ENCODE measurements at regions of chr18 and their contacts with region 1.

Region 1: DNA sequence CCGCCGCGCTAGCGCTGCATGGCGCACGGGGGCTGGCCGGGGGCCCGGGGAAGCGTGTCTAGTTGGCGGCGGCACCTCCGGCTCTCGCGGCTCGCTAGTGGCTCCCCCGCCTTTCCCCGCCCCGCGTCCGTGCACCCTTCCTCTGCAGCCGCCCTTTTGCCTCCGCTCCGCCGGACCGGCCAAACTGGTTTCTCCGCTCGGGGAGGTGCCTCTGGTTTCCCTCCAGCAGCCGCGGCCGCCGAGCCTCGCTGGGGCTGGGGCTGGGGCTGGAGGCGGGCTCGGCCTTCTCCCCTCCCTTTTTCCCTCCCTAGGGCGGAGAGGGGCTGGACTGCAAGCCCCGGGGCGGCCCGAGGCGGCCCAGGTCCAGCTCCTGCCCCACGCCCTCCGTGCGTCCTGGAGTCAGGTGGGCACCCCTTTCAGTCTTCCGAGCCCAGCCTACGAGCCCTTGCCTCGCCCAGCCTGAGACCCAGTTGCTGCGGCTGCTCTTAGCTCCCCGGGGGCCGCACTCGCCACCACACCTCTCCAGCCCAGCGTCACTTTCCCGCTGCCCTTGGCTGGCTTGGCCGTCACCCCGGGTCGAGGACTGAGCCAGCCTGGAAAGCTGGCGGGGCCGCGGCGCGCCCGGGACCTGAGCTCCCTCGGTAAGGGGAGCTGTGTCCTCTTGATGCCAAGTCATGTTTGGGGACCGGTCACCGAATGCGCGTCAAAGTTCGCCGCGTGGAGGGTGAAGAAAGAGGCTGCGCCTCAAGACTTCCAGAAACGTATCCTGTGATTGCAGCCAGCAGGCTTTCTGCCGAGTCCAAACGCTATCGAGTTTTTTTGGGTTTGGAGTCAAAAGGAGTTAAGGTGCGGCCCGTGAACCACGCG is at the start of gene ATP8B1:
- DNase-seq: peak; percentile 73
- ATAC-seq: peak; percentile 89
- H3K4me3 ChIP-seq: peak within 1 kb of the TSS; percentile 95
- H3K27ac ChIP-seq: peak within 1 kb of the TSS; percentile 77
- H3K4me1 ChIP-seq: peaks cover 8% of the 10 kb centered on the region
- H3K27me3 ChIP-seq: no peaks in the 10 kb centered on the region
- CTCF ChIP-seq: no peak
- POLR2A ChIP-seq: peak; percentile 47; the same call in 1 of the 2 replicates
- RAD21 ChIP-seq: no peak
- total RNA-seq, gene ATP8B1: 136 and 170 TPM in 2 replicates

Region 2: GRCh38 chr18:57666818-57667497 is 136.4 kb before region 1 on chr18:
- CTCF ChIA-PET with region 1: no interaction called
- POLR2A ChIA-PET with region 1: no interaction called
- dilution Hi-C with region 1: no loop called
- in situ Hi-C with region 1: no loop called
- intact Hi-C with region 1: loop called (anchors 10 kb)
- DNase-seq: peak; percentile 74
- ATAC-seq: peak; percentile 78
- H3K4me3 ChIP-seq: no peak overlapping the region
- H3K27ac ChIP-seq: peak overlapping the region; percentile 48; the same call in 1 of the 2 replicates
- H3K4me1 ChIP-seq: peaks cover 5% of the 10 kb centered on the region
- H3K27me3 ChIP-seq: no peaks in the 10 kb centered on the region
- CTCF ChIP-seq: no peak
- POLR2A ChIP-seq: no peak
- RAD21 ChIP-seq: no peak

Region 3: GRCh38 chr18:57698571-57699276 is 104.6 kb before region 1 on chr18:
- CTCF ChIA-PET with region 1: interaction called, 7 read pairs
- POLR2A ChIA-PET with region 1: no interaction called
- dilution Hi-C with region 1: no loop called
- in situ Hi-C with region 1: no loop called
- intact Hi-C with region 1: loop called (anchors 10 kb)
- DNase-seq: peak; percentile 74
- ATAC-seq: peak; percentile 54
- H3K4me3 ChIP-seq: no peak overlapping the region
- H3K27ac ChIP-seq: no peak overlapping the region
- H3K4me1 ChIP-seq: peaks cover 5% of the 10 kb centered on the region; the same call in 1 of the 2 replicates
- H3K27me3 ChIP-seq: no peaks in the 10 kb centered on the region
- CTCF ChIP-seq: no peak
- POLR2A ChIP-seq: no peak
- RAD21 ChIP-seq: no peak

Region 4: GRCh38 chr18:57737400-57738060 is 65.8 kb before region 1 on chr18:
- CTCF ChIA-PET with region 1: no interaction called
- POLR2A ChIA-PET with region 1: no interaction called
- dilution Hi-C with region 1: no loop called
- in situ Hi-C with region 1: no loop called
- intact Hi-C with region 1: loop called (anchors 2 kb)
- DNase-seq: peak; percentile 99
- ATAC-seq: peak; percentile 96
- H3K4me3 ChIP-seq: no peak overlapping the region
- H3K27ac ChIP-seq: peak overlapping the region; percentile 61
- H3K4me1 ChIP-seq: peaks cover 7% of the 10 kb centered on the region
- H3K27me3 ChIP-seq: no peaks in the 10 kb centered on the region
- CTCF ChIP-seq: no peak
- POLR2A ChIP-seq: no peak
- RAD21 ChIP-seq: peak; percentile 41; the same call in 1 of the 2 replicates

Region 5: GRCh38 chr18:57841568-57841967 is 38.2 kb after region 1 on chr18:
- CTCF ChIA-PET with region 1: no interaction called
- POLR2A ChIA-PET with region 1: no interaction called
- dilution Hi-C with region 1: no loop called
- in situ Hi-C with region 1: no loop called
- intact Hi-C with region 1: loop called (anchors 5 kb)
- DNase-seq: no peak
- ATAC-seq: no peak
- H3K4me3 ChIP-seq: no peak overlapping the region
- H3K27ac ChIP-seq: no peak overlapping the region
- H3K4me1 ChIP-seq: peaks cover 11% of the 10 kb centered on the region
- H3K27me3 ChIP-seq: no peaks in the 10 kb centered on the region
- CTCF ChIP-seq: no peak
- POLR2A ChIP-seq: no peak
- RAD21 ChIP-seq: no peak

Region 6: DNA sequence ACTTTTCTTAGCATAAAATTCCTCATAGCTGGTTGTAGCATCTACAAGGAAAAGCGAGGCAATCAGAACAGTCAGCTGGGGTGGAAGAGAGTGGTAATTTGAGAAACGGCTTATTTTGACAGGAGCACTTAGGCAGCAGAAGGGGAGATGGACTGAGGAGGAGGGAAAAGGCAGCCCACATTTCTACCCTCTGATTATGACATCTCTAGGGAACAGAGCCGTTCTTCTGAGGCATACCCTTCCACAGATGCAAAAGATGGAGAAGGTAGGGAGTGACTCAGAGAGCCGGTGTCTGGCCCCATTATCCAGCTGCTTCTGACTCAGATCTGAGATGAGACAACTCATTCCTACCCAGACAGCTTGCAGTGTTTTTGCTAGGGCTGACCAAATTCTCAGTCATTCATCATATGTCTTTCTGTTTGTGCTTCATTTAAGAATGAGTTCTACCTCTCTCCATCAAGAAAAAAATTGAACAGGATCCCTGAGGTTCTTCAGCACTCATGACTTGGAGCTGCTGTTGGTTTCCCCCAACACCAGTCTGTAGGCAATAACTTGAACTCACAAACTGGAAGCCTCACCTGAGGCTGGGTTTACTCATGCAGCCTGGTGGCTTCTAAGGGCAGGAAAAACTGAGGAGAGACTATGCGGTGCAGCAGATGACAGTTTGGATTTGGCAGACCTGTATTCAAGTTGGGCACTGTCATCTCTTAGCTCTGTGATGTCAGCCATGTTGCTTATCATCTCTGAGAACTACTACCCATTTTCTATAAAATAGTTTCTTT is 1320.4 kb after region 1 on chr18:
- CTCF ChIA-PET with region 1: no interaction called
- POLR2A ChIA-PET with region 1: no interaction called
- dilution Hi-C with region 1: no loop called
- in situ Hi-C with region 1: no loop called
- intact Hi-C with region 1: no loop called
- DNase-seq: peak; percentile 94
- ATAC-seq: peak; percentile 99
- H3K4me3 ChIP-seq: no peak overlapping the region
- H3K27ac ChIP-seq: no peak overlapping the region
- H3K4me1 ChIP-seq: peaks cover 3% of the 10 kb centered on the region
- H3K27me3 ChIP-seq: peaks cover 26% of the 10 kb centered on the region
- CTCF ChIP-seq: no peak
- POLR2A ChIP-seq: no peak
- RAD21 ChIP-seq: no peak